Activated CD4-positive, alpha-beta memory T cell treated with anti-CD3 and anti-CD28 coated beads for 36 hours (primary cell): ENCODE measurements at regions of chr10 and their contacts with region 1.

Region 1: GRCh38 chr10:7525314-7526016 is 114.6 kb upstream of the SFMBT2 start:
- DNase-seq: peak; percentile 63
- H3K4me3 Mint-ChIP-seq: no peak overlapping the region
- H3K27ac Mint-ChIP-seq: peak overlapping the region; percentile 5
- H3K4me1 Mint-ChIP-seq: no peaks in the 10 kb centered on the region
- H3K27me3 Mint-ChIP-seq: no peaks in the 10 kb centered on the region

Region 2: DNA sequence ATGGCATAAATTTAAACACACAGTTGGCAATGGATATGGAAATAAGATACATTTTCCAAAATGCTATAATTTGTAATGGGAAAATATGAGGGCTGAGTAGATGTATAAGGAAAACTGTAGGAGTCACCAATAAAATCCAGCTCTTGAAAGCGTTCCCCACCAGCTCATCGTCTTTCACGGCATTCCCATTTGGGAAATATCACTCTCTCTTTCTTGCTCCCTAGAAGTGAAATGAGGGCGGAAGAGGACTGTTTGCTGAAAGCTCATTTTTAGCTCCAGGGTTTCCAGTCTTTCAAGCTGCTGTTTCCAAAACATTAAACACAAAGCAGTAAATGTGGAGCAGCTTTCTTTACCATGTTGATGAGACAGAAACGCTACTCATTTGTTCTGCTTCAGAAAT is 10.0 kb before region 1 on chr10:
- CTCF ChIA-PET with region 1: interaction called, 12 read pairs
- POLR2A ChIA-PET with region 1: no interaction called
- intact Hi-C with region 1: no loop called
- DNase-seq: no peak
- H3K4me3 Mint-ChIP-seq: no peak overlapping the region
- H3K27ac Mint-ChIP-seq: no peak overlapping the region
- H3K4me1 Mint-ChIP-seq: peaks cover 15% of the 10 kb centered on the region
- H3K27me3 Mint-ChIP-seq: no peaks in the 10 kb centered on the region

Region 3: GRCh38 chr10:7622969-7623368 is 97.5 kb after region 1 on chr10:
- CTCF ChIA-PET with region 1: no interaction called
- POLR2A ChIA-PET with region 1: no interaction called
- intact Hi-C with region 1: loop called (anchors 10 kb)
- DNase-seq: no peak
- H3K4me3 Mint-ChIP-seq: no peak overlapping the region
- H3K27ac Mint-ChIP-seq: no peak overlapping the region
- H3K4me1 Mint-ChIP-seq: no peaks in the 10 kb centered on the region
- H3K27me3 Mint-ChIP-seq: peaks cover 5% of the 10 kb centered on the region

Region 4: DNA sequence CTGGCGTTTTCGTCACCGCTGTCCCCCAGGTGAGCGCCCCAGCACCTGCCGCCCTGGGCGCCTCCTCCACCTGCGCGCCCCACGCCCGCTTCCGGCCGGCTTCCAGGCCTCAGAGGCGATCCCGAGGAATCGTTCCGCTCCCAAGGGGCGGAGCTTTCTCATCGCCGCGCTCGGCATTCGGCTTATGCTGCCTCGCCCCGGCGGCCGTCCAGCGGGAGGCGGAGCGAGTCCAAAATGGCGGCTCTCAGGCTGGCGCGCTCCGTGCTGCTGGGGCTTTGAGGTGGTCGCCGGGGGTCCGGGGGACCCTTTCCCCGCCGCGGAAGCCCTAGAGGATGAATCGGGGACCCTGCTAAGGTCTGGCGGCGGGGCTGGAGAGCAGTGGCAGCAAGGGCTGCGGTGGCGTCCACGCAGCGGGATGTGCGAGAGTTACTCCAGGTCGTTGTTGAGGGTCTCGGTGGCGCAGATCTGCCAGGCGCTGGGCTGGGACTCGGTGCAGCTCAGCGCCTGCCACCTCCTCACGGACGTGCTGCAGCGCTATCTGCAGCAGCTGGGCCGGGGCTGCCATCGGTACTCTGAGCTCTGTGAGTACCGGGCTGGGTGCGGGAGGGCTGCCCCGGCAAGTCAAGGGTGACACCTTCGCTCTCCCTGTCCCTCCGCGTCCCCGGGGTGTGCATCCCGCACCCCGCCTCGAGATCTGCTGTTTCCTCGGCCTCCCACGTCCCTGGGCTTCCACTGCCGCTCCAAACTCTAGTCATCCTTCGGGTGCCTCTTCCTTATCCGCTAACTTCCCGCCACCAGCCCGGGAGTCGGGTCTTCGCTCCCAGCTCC is 293.0 kb after region 1 on chr10 and contains the start of gene TAF3:
- CTCF ChIA-PET with region 1: interaction called, 7 read pairs
- POLR2A ChIA-PET with region 1: no interaction called
- intact Hi-C with region 1: loop called (anchors 5 kb)
- DNase-seq: peak; percentile 95
- H3K4me3 Mint-ChIP-seq: peak within 1 kb of the TSS; percentile 98
- H3K27ac Mint-ChIP-seq: peak within 1 kb of the TSS; percentile 70
- H3K4me1 Mint-ChIP-seq: peaks cover 36% of the 10 kb centered on the region
- H3K27me3 Mint-ChIP-seq: peaks cover 2% of the 10 kb centered on the region
- total RNA-seq, gene TAF3: 12.2 to 12.3 TPM

Region 5: DNA sequence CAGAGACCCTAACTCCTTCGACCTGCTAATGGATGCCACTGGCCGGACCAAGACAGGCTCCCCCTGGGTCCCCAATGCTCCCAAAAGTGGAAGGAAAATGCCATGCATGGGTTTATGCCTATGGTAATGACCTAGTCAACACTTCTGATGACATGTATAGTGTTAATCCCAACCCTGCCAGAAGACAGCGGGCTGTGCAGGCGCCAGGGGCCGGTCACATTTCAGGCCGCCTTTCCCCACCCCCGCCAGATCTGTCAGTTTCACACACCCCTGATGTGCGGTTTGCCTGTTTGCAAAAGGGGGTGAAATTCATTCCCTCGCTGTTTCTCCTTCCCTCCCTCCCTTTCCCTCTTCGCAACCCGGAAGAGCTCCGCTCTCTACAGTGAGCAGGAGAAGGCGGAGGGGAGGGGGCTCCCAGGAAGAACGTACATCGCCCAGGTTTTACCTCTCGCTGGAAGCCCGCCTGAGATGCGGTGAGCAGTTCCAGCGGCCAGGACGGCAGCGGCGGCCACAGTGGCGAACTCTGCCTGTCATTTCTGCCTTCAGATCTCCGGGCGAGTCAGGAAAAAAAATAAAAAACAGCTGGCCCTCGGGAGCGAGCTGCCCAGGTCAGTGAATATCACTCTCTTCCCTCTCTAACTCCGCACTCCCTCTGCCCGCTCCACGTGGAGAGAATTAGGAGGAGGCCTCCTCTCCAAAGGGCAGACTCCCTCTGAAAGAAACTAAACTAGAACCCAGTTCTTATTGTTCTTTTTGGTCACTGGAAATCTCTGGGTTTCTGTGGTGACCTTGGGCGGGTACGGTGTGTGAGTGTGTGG is 519.7 kb after region 1 on chr10:
- CTCF ChIA-PET with region 1: no interaction called
- POLR2A ChIA-PET with region 1: no interaction called
- intact Hi-C with region 1: loop called (anchors 5 kb)
- DNase-seq: peak; percentile 40
- H3K4me3 Mint-ChIP-seq: peak overlapping the region; percentile 64
- H3K27ac Mint-ChIP-seq: no peak overlapping the region
- H3K4me1 Mint-ChIP-seq: peaks cover 68% of the 10 kb centered on the region
- H3K27me3 Mint-ChIP-seq: peaks cover 81% of the 10 kb centered on the region

Region 6: GRCh38 chr10:8204620-8205019 is 679.2 kb after region 1 on chr10:
- CTCF ChIA-PET with region 1: no interaction called
- POLR2A ChIA-PET with region 1: no interaction called
- intact Hi-C with region 1: no loop called
- DNase-seq: no peak
- H3K4me3 Mint-ChIP-seq: no peak overlapping the region
- H3K27ac Mint-ChIP-seq: no peak overlapping the region
- H3K4me1 Mint-ChIP-seq: peaks cover 2% of the 10 kb centered on the region
- H3K27me3 Mint-ChIP-seq: no peaks in the 10 kb centered on the region

Region 7: DNA sequence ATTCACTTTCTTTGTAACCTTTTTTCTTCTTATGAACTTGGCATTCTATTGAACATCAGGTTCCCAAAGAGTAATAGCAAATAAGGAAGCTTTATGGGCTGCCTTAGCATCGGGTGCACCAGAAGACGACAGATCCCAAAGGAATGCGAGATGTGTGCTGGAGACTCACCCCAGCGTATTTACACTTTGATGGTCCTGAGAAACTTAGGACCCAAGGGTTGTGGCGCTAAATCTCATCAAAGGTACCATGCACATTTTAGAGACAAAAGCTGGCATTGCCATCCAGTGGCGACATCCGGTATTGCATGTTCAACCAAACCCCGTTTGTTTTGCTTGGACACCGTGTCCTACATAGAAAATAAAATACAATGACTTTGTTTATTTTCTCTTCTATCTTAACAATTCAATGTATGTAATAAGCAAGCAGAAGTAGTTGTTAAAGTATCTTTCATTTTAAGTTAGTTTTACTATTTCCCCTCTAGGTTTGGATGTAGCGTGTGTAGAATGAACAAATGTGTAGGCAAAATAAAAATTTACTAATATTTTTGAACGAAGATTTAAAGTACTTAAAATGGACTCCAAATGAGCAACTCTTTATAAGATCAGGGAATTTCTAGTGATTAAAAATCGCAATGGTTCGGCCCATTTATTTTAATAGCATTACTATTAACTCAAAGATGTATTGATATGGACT is 1683.8 kb after region 1 on chr10:
- CTCF ChIA-PET with region 1: interaction called, 6 read pairs
- POLR2A ChIA-PET with region 1: no interaction called
- intact Hi-C with region 1: loop called (anchors 5 kb)
- DNase-seq: peak; percentile 83
- H3K4me3 Mint-ChIP-seq: no peak overlapping the region
- H3K27ac Mint-ChIP-seq: no peak overlapping the region
- H3K4me1 Mint-ChIP-seq: no peaks in the 10 kb centered on the region
- H3K27me3 Mint-ChIP-seq: peaks cover 9% of the 10 kb centered on the region

Region 8: DNA sequence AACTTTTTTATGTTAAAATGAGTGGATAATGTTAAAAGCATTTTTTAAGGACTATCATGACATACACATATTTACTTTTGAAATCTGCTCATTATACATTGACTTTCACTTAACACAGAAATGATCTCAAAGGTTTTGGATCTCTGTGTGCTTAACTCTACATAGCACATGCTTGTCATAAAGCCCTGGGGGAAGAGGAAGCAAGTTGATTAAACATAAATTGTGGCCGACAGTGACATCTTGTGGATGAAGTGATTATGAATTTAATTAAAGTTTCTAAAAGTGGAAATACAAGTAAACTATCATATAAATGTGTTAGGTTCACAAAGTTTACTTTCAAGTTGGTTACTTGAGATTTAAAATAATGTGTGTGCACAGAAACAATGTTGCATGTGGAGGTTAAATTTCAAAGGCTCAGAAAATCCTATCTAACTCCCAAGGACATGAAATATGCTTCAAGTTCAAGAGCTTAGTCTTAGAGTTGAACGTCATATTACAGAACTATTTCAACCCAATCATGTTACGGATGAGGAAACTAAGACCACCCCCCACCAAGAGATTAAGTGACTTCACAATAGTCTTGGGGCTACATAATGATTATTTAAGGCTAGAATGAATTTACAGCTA is 1776.8 kb after region 1 on chr10:
- CTCF ChIA-PET with region 1: interaction called, 20 read pairs
- POLR2A ChIA-PET with region 1: no interaction called
- intact Hi-C with region 1: loop called (anchors 1 kb)
- DNase-seq: no peak
- H3K4me3 Mint-ChIP-seq: no peak overlapping the region
- H3K27ac Mint-ChIP-seq: no peak overlapping the region
- H3K4me1 Mint-ChIP-seq: no peaks in the 10 kb centered on the region
- H3K27me3 Mint-ChIP-seq: peaks cover 7% of the 10 kb centered on the region